ENCODE measurements at regions of chr7 and their contacts with region 1.

Region 1: DNA sequence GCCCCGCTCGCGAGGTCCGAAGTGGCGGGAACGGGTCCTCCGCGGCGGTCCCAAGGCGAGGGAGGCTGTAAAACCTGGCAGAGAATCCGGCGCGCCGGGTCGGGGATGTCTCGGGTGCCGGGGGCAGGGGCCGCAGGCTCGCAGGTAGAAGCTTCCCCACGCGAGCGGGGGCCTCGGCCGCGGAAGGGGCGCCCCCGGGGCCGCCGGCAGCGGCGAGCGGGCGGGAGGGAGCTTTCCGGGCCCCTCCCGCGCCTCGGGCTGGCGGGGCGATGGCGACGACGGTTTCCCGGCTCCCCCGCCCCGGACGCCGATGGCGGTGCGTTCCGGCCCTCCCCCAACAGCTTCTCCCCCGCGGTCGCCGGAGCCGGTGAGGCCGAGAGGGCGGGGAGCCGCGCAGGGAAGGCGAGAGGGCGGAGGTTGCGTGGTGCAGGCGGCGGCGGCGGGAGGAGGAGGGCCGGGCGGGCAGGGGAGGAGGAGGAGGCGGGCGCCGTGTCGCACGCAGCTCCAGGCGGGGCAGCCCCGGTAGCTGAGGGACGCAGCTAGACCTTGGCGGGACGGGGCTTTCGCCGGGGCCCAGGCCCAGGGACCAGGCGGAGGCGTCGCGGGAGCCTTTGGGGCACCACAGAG is at the start of gene CUL1:
- DNase-seq: peak; percentile 36 to 92
- H3K4me3 ChIP-seq: peak within 1 kb of the TSS; percentile 97 to 99
- H3K27ac ChIP-seq: peak within 1 kb of the TSS; percentile 99 to 100
- H3K4me1 ChIP-seq: peaks cover 4 to 30% of the 10 kb centered on the region in 2 donors
- H3K27me3 ChIP-seq: no peaks in the 10 kb centered on the region
- CTCF ChIP-seq: no peak
- total RNA-seq, gene CUL1: 16.3 TPM

Region 2: GRCh38 chr7:148540041-148540738 is 158.3 kb before region 1 on chr7:
- intact Hi-C with region 1: loop called (anchors 2 kb)
- DNase-seq: peak; percentile 48 to 88
- H3K4me3 ChIP-seq: peak overlapping the region in 1 of 2 donors; percentile 30
- H3K27ac ChIP-seq: peak overlapping the region; percentile 77 to 83
- H3K4me1 ChIP-seq: no peaks in the 10 kb centered on the region
- H3K27me3 ChIP-seq: no peaks in the 10 kb centered on the region
- CTCF ChIP-seq: no peak

Region 3: DNA sequence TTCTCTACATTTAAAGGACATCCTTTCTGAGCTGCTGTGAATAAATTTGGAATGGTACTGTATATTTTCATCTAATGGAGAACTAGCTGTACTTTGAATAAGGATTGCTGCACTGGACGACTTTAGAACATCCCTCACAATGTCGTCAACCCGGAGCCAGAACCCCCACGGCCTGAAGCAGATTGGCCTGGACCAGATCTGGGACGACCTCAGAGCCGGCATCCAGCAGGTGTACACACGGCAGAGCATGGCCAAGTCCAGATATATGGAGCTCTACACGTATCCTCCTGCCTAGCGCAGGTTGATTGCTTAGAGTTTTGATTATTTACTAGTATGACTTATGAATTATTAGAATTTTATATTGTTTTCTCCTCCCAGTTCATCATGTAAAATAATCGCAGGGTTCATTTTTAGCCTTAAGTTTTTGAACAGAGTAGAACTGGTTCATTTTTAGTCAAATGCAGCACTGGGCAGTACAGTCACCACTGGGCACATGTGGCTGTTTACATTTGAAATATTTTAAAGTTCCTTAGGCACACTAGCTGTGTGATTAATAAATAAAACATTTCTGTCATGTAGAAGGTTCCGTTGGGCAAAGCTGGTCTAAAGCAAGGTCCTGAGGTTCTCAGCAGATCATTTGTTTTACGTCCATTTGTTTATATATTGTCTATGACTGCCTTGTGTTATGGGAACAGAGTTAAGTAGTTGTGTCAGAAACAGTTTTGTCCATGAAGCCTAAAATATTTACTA is 31.6 kb after region 1 on chr7:
- intact Hi-C with region 1: loop called (anchors 2 kb)
- DNase-seq: no peak
- H3K4me3 ChIP-seq: peak overlapping the region in 1 of 2 donors; percentile 10
- H3K27ac ChIP-seq: peak overlapping the region in 1 of 2 donors; percentile 38
- H3K4me1 ChIP-seq: peaks cover 3 to 22% of the 10 kb centered on the region in 2 donors
- H3K27me3 ChIP-seq: no peaks in the 10 kb centered on the region
- CTCF ChIP-seq: no peak

Region 4: DNA sequence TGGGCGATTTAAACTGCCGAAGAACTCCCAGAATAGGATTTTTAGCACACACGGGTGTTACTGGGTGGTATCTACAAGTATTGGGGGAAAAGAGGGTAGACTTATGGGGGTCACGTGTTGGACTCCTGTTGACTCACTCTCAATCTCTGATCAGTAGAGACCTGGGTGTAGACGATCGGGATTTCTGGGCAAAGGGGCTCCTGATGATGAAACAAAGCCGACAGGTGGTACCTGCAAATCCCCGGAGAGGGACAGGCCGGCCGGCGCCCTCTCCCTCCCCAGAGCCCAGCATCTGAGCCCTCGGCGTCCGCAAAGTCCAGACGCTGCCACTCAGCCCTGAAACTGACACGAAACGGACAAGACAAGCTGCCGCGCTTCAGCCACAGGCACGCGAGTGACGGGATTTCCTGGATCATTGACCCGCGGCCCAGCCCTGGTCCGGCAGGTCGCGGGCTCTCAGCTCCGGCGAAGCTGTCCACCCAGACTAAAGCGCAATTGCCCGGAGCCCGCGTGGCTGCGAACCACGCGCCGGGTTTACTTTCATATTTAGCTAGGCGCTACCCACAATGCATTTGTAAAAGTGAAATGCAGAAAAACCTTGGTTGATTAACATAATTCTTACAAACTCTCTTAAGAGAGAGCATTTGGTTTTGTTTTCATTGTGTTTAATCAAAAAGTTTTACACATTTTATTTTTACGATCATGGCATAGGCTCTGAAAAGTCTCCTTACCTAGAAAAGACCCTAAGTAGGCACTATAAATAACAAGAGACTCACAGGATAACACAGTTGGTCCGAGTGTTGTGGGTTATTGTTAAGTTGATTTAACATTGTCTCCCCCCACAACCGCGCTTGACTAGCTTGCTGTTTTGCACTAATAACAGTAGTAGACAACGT is 242.4 kb after region 1 on chr7:
- intact Hi-C with region 1: loop called (anchors 5 kb)
- DNase-seq: peak; percentile 38 to 90
- H3K4me3 ChIP-seq: peak overlapping the region; percentile 84 to 86
- H3K27ac ChIP-seq: peak overlapping the region; percentile 90 to 93
- H3K4me1 ChIP-seq: no peaks in the 10 kb centered on the region
- H3K27me3 ChIP-seq: no peaks in the 10 kb centered on the region
- CTCF ChIP-seq: no peak